A673 (cell line): ENCODE measurements at regions of chr5 and their contacts with region 1.

Region 1: DNA sequence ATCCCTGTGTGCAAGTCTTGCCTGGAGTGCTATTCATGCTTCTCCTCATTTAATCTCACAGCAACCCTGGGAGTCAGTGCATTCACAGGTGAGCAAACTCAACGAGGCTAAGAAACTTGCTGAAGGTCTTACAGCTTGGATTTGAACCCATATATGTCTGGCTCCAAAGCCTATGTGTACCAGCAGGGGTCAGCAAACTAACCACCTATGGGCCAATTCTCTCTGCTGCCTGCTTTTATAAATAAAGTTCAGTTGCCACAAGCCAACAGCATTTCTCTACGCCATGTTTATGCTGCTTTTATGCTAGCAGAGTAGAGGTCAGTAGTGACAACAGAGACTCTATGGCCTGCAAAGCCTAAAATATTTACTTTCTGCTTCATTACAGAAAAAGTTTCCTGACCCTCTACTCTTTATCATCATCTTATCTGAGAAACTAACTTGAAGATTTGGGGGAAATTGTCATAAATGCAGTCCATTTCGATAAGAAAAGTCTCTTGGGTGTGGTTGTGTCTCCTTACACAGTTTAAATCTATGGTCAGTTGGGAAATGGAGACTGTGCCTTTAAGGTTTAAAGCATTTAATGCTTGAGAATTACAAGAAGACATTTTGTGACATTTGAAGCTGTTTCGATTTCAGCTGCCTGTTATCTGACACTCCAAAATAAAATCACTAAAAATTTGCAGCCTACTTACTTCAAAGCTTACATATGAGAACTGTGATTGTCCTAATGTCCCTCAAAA is 137.7 kb downstream of the PRELID2 start:
- DNase-seq: peak; percentile 67
- H3K4me3 ChIP-seq: no peak overlapping the region
- H3K27ac ChIP-seq: no peak overlapping the region
- H3K4me1 ChIP-seq: peaks cover 4% of the 10 kb centered on the region
- H3K27me3 ChIP-seq: no peaks in the 10 kb centered on the region
- CTCF ChIP-seq: peak; percentile 72

Region 2: GRCh38 chr5:145811834-145812625 is 114.6 kb after region 1 on chr5:
- CTCF ChIA-PET with region 1: interaction called, 9 read pairs
- POLR2A ChIA-PET with region 1: no interaction called
- intact Hi-C with region 1: loop called (anchors 5 kb)
- DNase-seq: peak; percentile 65
- H3K4me3 ChIP-seq: no peak overlapping the region
- H3K27ac ChIP-seq: no peak overlapping the region
- H3K4me1 ChIP-seq: peaks cover 11% of the 10 kb centered on the region
- H3K27me3 ChIP-seq: no peaks in the 10 kb centered on the region
- CTCF ChIP-seq: peak; percentile 63

Region 3: DNA sequence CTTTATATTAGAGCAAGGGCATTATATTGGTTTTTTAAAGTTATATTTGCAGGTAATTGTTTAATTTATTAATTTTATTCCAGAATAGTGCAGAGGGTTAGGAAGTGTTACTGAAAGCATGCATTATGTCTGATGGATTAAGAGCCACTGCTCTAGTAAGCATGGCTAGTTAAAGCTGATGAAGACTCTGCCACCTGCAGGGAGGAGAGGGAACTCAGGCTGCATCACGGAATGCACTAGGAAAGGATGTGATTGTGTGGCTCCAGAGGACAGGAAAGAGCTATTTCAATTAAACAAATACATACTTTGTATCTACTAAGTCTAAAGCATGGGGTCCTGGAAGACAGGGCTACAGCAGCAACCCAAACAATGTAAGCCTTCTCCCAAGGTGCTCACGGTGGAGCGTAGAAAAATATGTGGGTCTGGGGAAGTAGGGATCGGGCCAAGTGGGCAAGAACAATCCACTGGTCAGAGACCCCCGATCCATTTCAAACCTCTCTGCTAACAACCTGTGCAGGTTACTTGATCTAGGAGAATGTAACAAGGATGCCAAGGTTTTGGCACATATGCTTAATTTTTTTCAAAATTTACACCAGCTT is 190.7 kb after region 1 on chr5:
- CTCF ChIA-PET with region 1: no interaction called
- POLR2A ChIA-PET with region 1: no interaction called
- intact Hi-C with region 1: loop called (anchors 5 kb)
- DNase-seq: peak; percentile 85
- H3K4me3 ChIP-seq: no peak overlapping the region
- H3K27ac ChIP-seq: no peak overlapping the region
- H3K4me1 ChIP-seq: no peaks in the 10 kb centered on the region
- H3K27me3 ChIP-seq: no peaks in the 10 kb centered on the region
- CTCF ChIP-seq: peak; percentile 93